ENCODE measurements at regions of chr12 and their contacts with region 1.

Region 1: GRCh38 chr12:56468216-56469006 is at the start of gene SPRYD4:
- DNase-seq: peak; percentile 95
- ATAC-seq: peak; percentile 88
- H3K4me3 Mint-ChIP-seq: peak within 1 kb of the TSS; percentile 99
- H3K27ac Mint-ChIP-seq: peak within 1 kb of the TSS; percentile 98
- H3K4me1 Mint-ChIP-seq: peaks cover 35% of the 10 kb centered on the region
- H3K27me3 Mint-ChIP-seq: no peaks in the 10 kb centered on the region
- CTCF ChIP-seq: no peak
- total RNA-seq, gene SPRYD4: 3.2 to 3.3 TPM

Region 2: DNA sequence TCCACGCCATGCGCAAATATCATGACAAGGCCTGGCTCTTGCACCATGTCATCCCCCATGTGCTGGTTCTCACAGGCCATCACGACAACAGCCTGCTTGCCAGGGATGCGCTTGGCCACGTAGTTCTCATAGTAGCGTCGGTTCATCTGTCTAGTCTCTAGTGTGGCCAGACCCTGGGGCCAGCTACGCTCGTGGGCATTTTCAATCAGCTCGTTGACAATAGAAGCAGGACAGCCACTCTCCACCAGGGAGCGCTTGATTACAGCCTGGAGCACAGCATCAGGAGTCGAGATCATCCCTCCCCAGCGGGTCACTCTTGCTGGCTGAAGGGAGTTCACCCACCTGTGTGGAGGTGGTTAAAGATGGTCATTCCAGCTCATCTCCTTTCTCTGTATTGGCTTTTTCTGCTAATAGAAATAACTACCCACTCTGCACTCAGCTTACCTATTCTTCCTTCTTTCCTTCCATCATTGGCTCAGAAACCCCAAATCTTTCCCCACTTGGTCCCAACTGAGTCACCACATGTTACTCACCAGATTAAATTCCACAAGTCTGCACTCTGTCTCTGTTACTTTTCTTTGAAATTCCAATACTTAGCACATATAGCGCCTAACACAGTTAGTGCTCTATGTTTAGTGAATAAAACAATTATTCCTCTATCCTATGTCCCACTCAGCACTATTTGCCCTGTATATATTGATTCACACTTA is 261.8 kb before region 1 on chr12:
- CTCF ChIA-PET with region 1: interaction called, 11 read pairs
- POLR2A ChIA-PET with region 1: no interaction called
- intact Hi-C with region 1: no loop called
- DNase-seq: peak; percentile 67
- ATAC-seq: peak; percentile 80
- H3K4me3 Mint-ChIP-seq: no peak overlapping the region
- H3K27ac Mint-ChIP-seq: no peak overlapping the region
- H3K4me1 Mint-ChIP-seq: peaks cover 4% of the 10 kb centered on the region
- H3K27me3 Mint-ChIP-seq: no peaks in the 10 kb centered on the region
- CTCF ChIP-seq: peak; percentile 36

Region 3: GRCh38 chr12:56266693-56267442 is 201.5 kb before region 1 on chr12 and contains the start of gene COQ10A:
- CTCF ChIA-PET with region 1: interaction called, 15 read pairs
- POLR2A ChIA-PET with region 1: interaction called, 3 read pairs
- intact Hi-C with region 1: no loop called
- DNase-seq: peak; percentile 90
- ATAC-seq: peak; percentile 90
- H3K4me3 Mint-ChIP-seq: peak within 1 kb of the TSS; percentile 93
- H3K27ac Mint-ChIP-seq: peak within 1 kb of the TSS; percentile 91
- H3K4me1 Mint-ChIP-seq: peaks cover 19% of the 10 kb centered on the region
- H3K27me3 Mint-ChIP-seq: no peaks in the 10 kb centered on the region
- CTCF ChIP-seq: peak; percentile 84
- total RNA-seq, gene COQ10A: 7.9 to 9.6 TPM

Region 4: GRCh38 chr12:56315622-56316473 is 152.6 kb before region 1 on chr12 and contains the start of gene CNPY2:
- CTCF ChIA-PET with region 1: interaction called, 14 read pairs
- POLR2A ChIA-PET with region 1: interaction called, 5 read pairs
- intact Hi-C with region 1: no loop called
- DNase-seq: peak; percentile 98
- ATAC-seq: peak; percentile 91
- H3K4me3 Mint-ChIP-seq: peak within 1 kb of the TSS; percentile 85
- H3K27ac Mint-ChIP-seq: peak within 1 kb of the TSS; percentile 92
- H3K4me1 Mint-ChIP-seq: peaks cover 9% of the 10 kb centered on the region
- H3K27me3 Mint-ChIP-seq: no peaks in the 10 kb centered on the region
- CTCF ChIP-seq: no peak
- total RNA-seq, gene CNPY2: 81.0 to 81.7 TPM

Region 5: DNA sequence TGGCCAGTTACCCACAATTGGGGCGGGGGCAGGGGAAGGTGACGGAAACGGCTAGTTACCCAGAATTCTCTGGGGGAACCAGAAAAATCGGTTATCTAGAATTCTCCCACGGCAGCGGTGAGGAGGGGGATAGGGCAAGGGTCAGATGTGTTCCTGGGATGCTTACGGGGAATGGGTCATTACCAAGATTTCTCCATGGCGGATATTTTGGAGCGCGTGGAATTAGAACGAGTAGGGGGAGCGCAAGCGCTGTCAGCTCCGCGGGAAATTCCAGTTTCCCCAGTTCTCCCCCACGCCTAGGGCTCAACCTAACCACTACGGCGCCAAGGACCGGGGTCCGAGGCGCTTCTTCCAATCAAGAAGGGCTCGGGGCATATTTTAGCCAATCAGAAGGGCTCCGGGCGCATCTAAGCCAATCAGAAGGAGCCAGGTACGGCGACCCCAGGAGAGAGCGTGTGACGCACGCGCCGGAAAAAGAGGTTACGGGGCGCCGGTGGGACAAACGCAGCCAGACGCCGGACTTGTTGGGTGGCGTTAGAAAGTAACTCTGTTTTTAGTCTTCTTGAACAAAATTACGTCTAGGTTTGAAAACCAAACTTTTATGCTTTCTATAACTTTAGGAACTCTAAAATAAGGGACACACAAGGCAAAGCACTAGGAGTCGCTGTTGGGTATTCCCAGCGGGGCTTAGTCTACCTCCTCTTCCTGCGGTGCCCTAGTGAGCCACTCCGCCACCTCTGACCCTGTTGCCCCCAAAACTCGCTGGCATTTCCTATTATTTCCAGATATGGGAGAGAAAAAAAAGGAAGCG is 134.5 kb before region 1 on chr12 and contains the start of gene PAN2:
- CTCF ChIA-PET with region 1: interaction called, 10 read pairs
- POLR2A ChIA-PET with region 1: interaction called, 6 read pairs
- intact Hi-C with region 1: loop called (anchors 1 kb)
- DNase-seq: peak; percentile 98
- ATAC-seq: peak; percentile 87
- H3K4me3 Mint-ChIP-seq: peak within 1 kb of the TSS; percentile 86
- H3K27ac Mint-ChIP-seq: peak within 1 kb of the TSS; percentile 99
- H3K4me1 Mint-ChIP-seq: peaks cover 40% of the 10 kb centered on the region
- H3K27me3 Mint-ChIP-seq: no peaks in the 10 kb centered on the region
- CTCF ChIP-seq: peak; percentile 61
- total RNA-seq, gene PAN2: 55.7 to 69.0 TPM

Region 6: GRCh38 chr12:56448860-56449621 is 19.4 kb before region 1 on chr12 and contains the start of gene TIMELESS:
- CTCF ChIA-PET with region 1: interaction called, 35 read pairs
- POLR2A ChIA-PET with region 1: interaction called, 12 read pairs
- intact Hi-C with region 1: no loop called
- DNase-seq: peak; percentile 86
- ATAC-seq: peak; percentile 97
- H3K4me3 Mint-ChIP-seq: peak within 1 kb of the TSS; percentile 88
- H3K27ac Mint-ChIP-seq: peak within 1 kb of the TSS; percentile 93
- H3K4me1 Mint-ChIP-seq: peaks cover 24% of the 10 kb centered on the region
- H3K27me3 Mint-ChIP-seq: no peaks in the 10 kb centered on the region
- CTCF ChIP-seq: no peak
- total RNA-seq, gene TIMELESS: 48.7 to 49.2 TPM

Region 7: GRCh38 chr12:56630160-56630632 is 161.8 kb after region 1 on chr12 and contains the start of gene BAZ2A:
- CTCF ChIA-PET with region 1: no interaction called
- POLR2A ChIA-PET with region 1: no interaction called
- intact Hi-C with region 1: no loop called
- DNase-seq: peak; percentile 95
- ATAC-seq: peak; percentile 70
- H3K4me3 Mint-ChIP-seq: peak within 1 kb of the TSS; percentile 92
- H3K27ac Mint-ChIP-seq: peak within 1 kb of the TSS; percentile 85
- H3K4me1 Mint-ChIP-seq: peaks cover 68% of the 10 kb centered on the region
- H3K27me3 Mint-ChIP-seq: no peaks in the 10 kb centered on the region
- CTCF ChIP-seq: no peak
- total RNA-seq, gene BAZ2A: 80.1 to 89.3 TPM